ENCODE measurements at regions of chr6 and their contacts with region 1.

Region 1: DNA sequence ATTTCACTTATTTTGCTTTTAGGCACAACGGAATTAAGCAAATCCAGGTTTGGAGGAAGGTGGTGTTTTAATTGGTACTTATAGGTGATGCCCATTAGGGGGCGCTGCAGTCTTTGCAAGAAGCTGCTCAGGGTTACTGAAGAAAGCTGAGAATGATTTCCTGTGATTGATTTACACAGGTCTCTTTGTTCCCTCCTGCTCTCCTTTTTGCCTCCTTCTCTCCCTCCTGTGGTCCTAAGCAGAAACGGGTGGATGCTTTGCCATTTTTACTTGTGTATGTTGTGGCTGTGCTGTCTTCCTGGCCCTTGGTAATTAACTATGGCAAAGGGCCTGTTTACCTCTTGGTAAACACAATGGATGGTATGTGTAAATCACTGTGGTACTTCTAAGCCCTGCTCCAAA is 97.8 kb downstream of the ANKS1A start:
- DNase-seq: peak; percentile 85

Region 2: DNA sequence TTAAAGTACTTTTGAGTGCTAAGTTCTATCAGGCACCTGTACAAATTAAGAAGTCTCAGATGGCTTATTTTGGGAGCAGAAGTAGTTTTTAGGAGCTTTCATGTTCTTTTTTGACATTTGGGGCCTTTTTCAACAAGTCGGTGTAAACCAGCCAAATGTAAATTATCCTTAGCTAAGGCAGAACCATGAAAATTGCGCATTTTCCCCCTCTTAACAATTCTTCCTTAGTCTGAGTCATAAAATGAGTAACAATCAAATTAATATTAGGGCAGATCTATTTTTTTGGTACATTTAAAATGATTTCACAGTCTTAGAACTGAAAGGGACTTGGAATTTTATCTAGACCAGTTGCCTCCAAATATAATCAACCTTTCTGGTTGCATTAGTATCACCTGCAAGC is 10.6 kb before region 1 on chr6:
- intact Hi-C with region 1: loop called in 1 of 2 experiments (anchors 1 kb)
- DNase-seq: no peak

Region 3: DNA sequence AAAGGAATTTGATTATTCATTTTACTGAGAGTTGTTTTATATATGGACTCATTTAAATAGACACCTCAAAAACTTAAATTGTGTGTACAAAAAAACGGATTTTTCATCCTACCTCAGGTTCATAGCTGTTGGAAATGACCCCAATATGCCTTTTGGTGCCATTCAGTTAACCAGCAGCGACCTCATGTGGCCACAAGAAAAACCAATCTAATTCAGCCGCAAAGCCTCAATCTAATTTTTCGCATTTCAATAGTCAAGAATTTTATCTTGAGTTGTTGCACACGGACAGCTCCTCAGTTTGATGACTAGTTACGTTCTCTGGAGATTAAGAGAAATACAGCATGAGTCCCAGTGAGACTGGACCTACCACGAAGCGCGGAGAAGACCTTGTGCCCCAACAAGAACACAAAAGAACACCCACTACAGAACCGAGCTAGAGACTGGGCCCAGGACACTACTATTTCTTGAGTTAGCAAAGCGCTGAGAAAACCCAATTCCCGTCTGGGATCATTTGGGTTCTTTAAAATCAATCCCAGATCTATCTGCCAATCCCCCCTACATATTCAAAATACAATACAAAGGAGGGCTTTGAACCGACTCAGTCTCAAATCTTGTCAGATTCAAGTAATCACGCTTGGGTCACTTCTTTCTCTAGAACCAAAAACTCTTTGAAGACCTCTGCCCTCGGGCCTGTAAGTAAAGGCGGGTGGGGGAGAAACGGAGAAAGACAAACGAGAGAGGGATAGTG is 153.2 kb after region 1 on chr6:
- intact Hi-C with region 1: loop called (anchors 2 to 5 kb)
- DNase-seq: no peak

Region 4: GRCh38 chr6:35240840-35241801 is 254.3 kb after region 1 on chr6:
- intact Hi-C with region 1: loop called (anchors 5 to 10 kb)
- DNase-seq: peak; percentile 89

Measured in posterior vena cava (tissue), 2 donors.